CD4-positive, alpha-beta T cell (primary cell): ENCODE measurements at regions of chr9 and their contacts with region 1.

Region 1: GRCh38 chr9:70602321-70603019 is 188.0 kb upstream of the KLF9 start:
- DNase-seq: peak; percentile 8 to 77 (median 28)
- ATAC-seq: peak; percentile 70
- H3K4me3 ChIP-seq: no peak overlapping the region
- H3K4me3 Mint-ChIP-seq: no peak overlapping the region
- H3K27ac ChIP-seq: no peak overlapping the region
- H3K27ac Mint-ChIP-seq: no peak overlapping the region
- H3K4me1 ChIP-seq: peaks cover 4% of the 10 kb centered on the region
- H3K4me1 Mint-ChIP-seq: peaks cover 5% of the 10 kb centered on the region
- H3K27me3 ChIP-seq: no peaks in the 10 kb centered on the region
- H3K27me3 Mint-ChIP-seq: no peaks in the 10 kb centered on the region
- CTCF ChIP-seq: peak; percentile 88

Region 2: DNA sequence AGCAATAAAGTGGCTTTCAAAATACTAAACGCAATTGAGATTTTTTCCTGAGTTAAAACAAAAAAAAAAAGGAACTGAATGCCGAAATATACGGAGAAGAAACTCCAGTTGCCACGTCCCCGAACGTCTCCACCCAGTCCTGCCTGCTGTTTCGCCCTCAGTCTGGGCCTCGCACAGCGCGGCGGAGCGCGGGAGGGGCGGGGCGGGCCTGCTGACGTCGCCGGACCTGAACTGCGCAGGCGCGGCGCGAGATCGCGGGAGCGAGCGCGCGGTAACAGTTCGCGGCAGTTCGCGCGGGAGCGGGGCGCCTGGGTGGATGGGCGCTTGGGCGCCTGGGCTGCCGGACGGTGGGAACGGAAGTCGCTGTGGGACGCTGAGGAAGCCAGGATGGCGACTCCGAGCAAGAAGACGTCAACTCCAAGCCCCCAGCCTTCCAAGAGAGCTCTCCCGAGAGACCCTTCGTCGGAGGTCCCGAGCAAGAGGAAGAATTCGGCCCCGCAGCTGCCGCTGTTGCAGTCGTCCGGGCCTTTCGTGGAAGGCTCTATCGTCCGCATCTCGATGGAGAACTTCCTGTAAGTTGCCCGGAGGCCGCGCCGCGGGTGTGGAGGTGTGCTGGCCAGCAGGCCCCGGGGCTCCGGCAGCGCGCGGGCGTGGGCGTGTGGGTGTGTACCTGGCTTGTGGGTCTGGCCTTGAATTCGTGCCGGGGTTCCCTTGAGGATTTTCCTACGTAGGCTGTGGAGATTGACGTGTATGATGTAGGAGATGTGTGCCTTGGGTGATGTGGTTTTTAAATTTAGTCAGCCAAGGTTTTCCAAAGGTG is 343.6 kb before region 1 on chr9 and contains the start of gene SMC5:
- CTCF ChIA-PET with region 1: interaction called, 3 read pairs
- POLR2A ChIA-PET with region 1: no interaction called
- intact Hi-C with region 1: loop called in 1 of 2 experiments (anchors 5 kb)
- DNase-seq: peak; percentile 79 to 97 (median 88)
- ATAC-seq: peak; percentile 81
- H3K4me3 ChIP-seq: peak within 1 kb of the TSS; percentile 89
- H3K4me3 Mint-ChIP-seq: peak within 1 kb of the TSS; percentile 93
- H3K27ac ChIP-seq: peak within 1 kb of the TSS; percentile 89 to 94
- H3K27ac Mint-ChIP-seq: peak within 1 kb of the TSS; percentile 96
- H3K4me1 ChIP-seq: peaks cover 44% of the 10 kb centered on the region
- H3K4me1 Mint-ChIP-seq: peaks cover 61% of the 10 kb centered on the region
- H3K27me3 ChIP-seq: no peaks in the 10 kb centered on the region
- H3K27me3 Mint-ChIP-seq: no peaks in the 10 kb centered on the region
- CTCF ChIP-seq: no peak
- total RNA-seq, gene SMC5: 37.7 to 38.1 TPM

Region 3: GRCh38 chr9:70352802-70353201 is 249.7 kb before region 1 on chr9:
- CTCF ChIA-PET with region 1: interaction called, 4 read pairs
- POLR2A ChIA-PET with region 1: interaction called, 4 read pairs
- intact Hi-C with region 1: loop called (anchors 1 kb)
- DNase-seq: peak in 3 of 14 experiments; percentile 43 to 52 (median 51)
- ATAC-seq: no peak
- H3K4me3 ChIP-seq: no peak overlapping the region
- H3K4me3 Mint-ChIP-seq: no peak overlapping the region
- H3K27ac ChIP-seq: no peak overlapping the region
- H3K27ac Mint-ChIP-seq: no peak overlapping the region
- H3K4me1 ChIP-seq: no peaks in the 10 kb centered on the region
- H3K4me1 Mint-ChIP-seq: no peaks in the 10 kb centered on the region
- H3K27me3 ChIP-seq: no peaks in the 10 kb centered on the region
- H3K27me3 Mint-ChIP-seq: no peaks in the 10 kb centered on the region
- CTCF ChIP-seq: peak; percentile 80

Region 4: GRCh38 chr9:70484210-70485130 is 118.0 kb before region 1 on chr9:
- CTCF ChIA-PET with region 1: interaction called, 6 read pairs
- POLR2A ChIA-PET with region 1: no interaction called
- intact Hi-C with region 1: loop called in 1 of 2 experiments (anchors 2 kb)
- DNase-seq: peak in 5 of 14 experiments; percentile 1 to 75 (median 56)
- ATAC-seq: peak; percentile 62
- H3K4me3 ChIP-seq: no peak overlapping the region
- H3K4me3 Mint-ChIP-seq: no peak overlapping the region
- H3K27ac ChIP-seq: no peak overlapping the region
- H3K27ac Mint-ChIP-seq: no peak overlapping the region
- H3K4me1 ChIP-seq: no peaks in the 10 kb centered on the region
- H3K4me1 Mint-ChIP-seq: peaks cover 12% of the 10 kb centered on the region
- H3K27me3 ChIP-seq: no peaks in the 10 kb centered on the region
- H3K27me3 Mint-ChIP-seq: no peaks in the 10 kb centered on the region
- CTCF ChIP-seq: peak; percentile 77